ENCODE measurements at regions of chr9 and their contacts with region 1.

Region 1: GRCh38 chr9:21585756-21586752 is 103.9 kb upstream of the IFNE start:
- DNase-seq: peak; percentile 43
- H3K4me3 ChIP-seq: no peak overlapping the region
- H3K27ac ChIP-seq: peak overlapping the region; percentile 20
- H3K4me1 ChIP-seq: peaks cover 65% of the 10 kb centered on the region
- H3K27me3 ChIP-seq: no peaks in the 10 kb centered on the region

Region 2: DNA sequence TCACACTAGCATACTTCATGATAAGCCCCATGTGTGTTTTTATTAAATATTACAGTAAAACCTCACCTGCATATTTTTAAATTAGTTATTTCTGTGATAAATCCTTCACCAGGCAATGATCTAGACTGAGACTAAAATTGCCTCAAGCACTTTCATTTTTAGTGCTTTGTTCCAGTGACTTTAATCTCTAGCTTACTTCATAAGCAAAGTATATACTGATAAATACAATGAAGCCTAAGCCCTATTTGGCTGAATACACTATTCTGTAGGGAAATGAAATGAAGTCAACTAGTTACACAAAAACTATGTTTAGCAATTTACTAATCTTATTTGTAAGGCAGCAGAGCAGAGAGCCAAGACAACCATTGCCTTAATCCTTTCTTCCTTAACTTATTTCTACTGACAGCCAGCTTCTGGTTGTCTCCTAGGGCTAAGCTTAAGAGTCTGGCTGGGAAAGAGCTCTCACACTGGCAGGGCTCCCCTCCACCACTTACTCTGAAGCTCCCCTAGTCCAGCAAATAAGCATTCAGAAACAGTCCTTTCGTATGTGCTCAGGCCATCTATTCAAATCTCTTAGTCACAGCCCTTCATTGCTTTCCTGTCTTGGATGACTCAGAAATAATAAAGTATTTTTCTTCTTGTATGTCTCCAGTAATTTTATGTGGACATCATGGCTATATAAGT is 185.0 kb after region 1 on chr9:
- in situ Hi-C with region 1: loop called (anchors 10 kb)
- DNase-seq: peak; percentile 88
- H3K4me3 ChIP-seq: peak overlapping the region; percentile 30
- H3K27ac ChIP-seq: peak overlapping the region; percentile 75
- H3K4me1 ChIP-seq: peaks cover 14% of the 10 kb centered on the region
- H3K27me3 ChIP-seq: no peaks in the 10 kb centered on the region

Measured in GM23248 (cell line).